Dendritic cell treated with granulocyte-macrophage colony-stimulating factor and Interleukin-4, amounts not matched to agents 40 ng/mL and 50 ng/mL, for 4 days (primary cell): ENCODE measurements at regions of chr18 and their contacts with region 1.

Region 1: DNA sequence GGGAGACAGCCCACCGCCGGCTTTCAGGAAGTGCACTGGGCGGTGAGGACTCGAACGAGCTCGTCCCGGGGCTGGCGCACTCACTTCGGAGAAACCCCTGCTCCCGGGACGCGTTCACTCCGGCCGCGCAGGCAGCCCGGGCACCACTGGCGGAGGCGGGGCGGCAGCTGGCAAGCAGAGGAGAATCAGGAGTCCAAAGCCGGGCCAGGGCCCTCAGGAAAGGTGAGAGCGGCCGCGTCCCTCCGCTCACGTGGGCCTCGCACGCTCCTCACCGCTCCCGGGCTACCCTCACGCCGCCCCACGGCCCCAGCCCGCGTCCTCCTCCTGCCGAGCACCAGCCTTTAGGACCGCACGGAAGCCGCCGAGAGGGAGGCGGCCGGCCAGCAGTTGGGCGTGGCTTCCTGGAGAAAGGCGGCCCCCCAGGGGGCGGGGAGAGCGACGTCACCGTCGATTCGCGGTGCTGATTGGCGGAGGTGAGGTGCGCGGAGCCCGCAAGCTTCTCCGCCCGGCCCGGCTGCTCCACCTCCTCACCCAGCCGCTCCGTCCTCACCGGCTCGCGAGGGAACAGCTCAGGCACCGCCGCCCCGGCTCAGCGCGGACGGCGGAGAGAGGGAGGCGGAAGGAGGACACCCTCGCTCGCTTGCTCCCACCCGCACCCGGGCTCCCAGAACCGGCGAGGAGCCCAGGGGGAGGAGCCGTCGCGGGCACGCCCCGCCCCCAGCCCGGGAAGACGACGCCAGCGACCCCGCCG is at the start of gene ZCCHC2:
- H3K4me3 Mint-ChIP-seq: peak within 1 kb of the TSS; percentile 91
- H3K27ac Mint-ChIP-seq: peak within 1 kb of the TSS; percentile 89
- H3K4me1 Mint-ChIP-seq: peaks cover 33% of the 10 kb centered on the region
- H3K27me3 Mint-ChIP-seq: peaks cover 5% of the 10 kb centered on the region

Region 2: DNA sequence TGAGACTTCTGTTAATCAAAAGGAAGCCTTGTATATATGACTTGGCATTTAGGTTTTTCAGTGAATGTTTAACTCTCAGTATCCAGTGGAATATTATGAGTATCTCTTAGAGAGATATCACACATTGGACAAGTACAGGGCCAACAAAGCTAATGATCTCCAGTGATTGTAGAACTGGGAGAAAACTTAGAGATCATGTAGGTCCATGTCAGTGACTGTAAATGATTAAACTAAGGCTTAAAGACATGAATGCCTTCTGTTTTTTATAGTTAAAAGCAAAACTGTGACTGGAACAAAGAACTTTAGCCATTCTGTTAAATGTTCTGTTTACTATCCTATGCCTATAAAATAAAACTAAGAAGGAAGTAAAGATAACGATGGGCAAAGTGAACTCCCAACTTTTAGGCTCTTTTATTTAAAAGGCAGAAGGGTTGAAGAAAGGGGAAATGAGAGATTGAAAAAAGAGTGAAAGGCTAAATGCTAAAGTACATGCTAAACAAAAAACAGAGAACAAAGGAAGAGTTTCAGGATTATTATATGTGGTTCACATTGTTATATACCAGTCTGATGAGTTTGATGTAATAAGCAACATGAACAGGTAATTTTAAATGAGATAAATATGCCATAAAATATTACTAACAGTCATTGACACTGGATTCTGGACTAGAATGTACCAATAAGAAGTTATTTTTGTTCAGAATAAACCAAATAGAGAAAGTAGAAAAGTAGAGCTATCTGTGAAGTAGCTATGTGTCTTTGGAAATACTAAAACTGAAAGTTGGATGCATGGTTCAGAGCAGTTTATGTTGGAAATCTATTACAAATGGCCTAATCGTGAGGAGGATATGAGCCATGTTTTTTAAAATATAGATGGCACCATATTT is 234.7 kb before region 1 on chr18:
- intact Hi-C with region 1: no loop called
- H3K4me3 Mint-ChIP-seq: peak overlapping the region; percentile 57
- H3K27ac Mint-ChIP-seq: peak overlapping the region; percentile 93
- H3K4me1 Mint-ChIP-seq: peaks cover 46% of the 10 kb centered on the region
- H3K27me3 Mint-ChIP-seq: no peaks in the 10 kb centered on the region

Region 3: DNA sequence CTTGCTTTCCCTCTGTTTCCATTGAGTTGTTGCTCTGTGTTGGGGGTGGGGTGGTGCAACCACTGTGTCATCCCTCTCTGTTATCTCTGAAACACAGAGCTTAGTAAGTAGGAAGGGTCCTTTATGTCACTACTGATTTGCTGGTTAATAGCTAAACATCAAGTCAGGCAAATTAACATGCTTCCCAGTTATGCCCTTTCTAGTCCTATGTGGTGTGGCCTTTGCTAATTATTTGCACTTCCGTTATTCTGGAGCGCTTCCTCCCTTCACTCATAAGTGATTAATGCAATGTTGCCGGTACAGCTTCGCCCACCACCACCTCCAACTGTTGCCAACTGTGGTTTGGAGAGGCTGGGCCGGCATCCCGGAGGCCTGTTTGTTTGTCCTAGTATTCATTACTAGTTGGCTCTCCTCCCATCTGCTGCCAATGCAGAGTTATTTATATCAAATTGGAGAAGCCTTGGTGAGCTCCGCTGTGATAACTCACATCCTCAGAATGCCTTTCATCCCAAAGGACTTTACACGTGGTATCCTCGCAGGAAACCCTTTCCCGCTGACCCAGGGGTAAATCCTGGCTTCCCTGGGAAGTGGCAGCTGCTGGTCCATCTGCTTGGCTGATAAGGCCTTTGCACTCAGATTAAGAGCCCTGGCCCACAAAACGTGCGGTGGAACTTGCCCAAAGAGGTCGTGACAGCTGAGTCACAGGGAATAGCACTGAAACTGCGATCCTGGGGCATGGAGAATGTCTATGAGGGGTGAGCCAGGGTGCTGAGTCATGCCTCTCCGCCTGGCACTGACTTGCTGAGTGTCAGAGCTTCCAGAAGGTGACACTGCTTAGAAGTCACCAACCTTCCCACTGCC is 71.9 kb before region 1 on chr18:
- intact Hi-C with region 1: loop called (anchors 5 kb)
- H3K4me3 Mint-ChIP-seq: no peak overlapping the region
- H3K27ac Mint-ChIP-seq: peak overlapping the region; percentile 74
- H3K4me1 Mint-ChIP-seq: peaks cover 69% of the 10 kb centered on the region
- H3K27me3 Mint-ChIP-seq: no peaks in the 10 kb centered on the region